Calu3 (cell line): ENCODE measurements at regions of chr3 and their contacts with region 1.

Region 1: DNA sequence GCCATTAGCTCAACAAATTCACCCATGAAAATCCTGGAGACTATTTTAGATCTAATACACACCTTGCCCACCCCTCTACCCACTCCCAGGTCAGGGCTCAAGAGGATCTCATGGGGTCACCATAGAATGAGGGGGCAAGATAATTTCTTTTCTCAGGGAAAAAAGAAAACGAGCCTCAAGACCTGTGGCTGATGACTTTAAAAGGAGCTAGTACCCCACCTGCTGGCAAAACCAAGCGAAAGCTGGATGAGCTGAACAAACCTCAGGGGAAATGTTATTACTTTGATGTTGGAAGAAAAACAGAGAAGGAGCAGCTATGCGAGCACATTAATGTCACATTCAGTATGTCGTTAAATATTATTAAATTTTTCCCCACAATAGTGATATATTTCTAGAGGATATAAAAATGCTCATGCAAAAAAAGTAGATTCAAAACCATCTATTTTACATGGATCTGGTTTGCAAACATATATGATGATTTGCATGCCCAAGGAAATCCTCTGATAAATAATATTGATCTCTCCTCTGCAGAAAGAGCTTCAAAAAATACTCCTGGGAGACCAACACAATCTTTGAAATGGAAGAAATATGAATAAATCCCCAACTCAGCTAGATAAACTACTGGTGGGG is 37.7 kb downstream of the PLD1 start:
- DNase-seq: peak; percentile 82
- H3K4me3 Mint-ChIP-seq: no peak overlapping the region
- H3K27ac Mint-ChIP-seq: no peak overlapping the region
- H3K4me1 Mint-ChIP-seq: peaks cover 81% of the 10 kb centered on the region
- H3K27me3 Mint-ChIP-seq: no peaks in the 10 kb centered on the region
- CTCF ChIP-seq: peak; percentile 77

Region 2: DNA sequence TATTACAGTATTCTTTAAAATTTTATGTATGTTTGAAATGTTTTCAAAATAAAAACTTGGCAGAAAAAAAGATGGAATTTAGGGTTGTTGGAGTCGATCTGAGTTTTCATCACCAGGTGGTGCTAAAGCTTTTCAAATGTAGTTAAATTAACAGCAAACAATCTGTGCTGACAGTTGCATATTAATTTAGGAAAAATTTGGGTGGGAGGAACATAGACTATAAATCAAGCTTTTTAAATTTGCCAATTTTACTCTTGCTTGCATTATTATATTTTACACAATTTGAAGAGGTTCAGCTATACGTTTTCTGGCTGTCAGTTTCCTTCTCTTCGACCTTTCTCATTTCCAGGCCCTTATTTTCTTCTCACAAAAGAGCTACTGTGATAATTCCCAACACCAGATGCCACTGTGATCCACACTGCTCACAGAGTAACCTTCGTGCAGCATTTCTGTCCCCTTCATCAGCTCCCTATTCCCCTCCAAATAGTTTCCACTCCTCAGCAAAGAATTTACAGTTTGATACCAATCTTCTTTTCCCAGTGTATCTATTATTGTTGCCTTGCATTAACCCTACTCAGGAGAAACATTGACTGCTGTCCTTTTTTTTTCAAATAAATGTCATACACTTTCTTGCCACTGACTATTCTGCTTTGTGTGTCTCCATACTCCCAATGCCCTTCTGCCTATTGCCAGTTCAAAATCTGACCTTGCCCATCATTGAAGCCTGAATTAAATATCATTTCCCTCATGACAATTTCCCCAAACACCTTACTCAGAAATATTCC is 810.7 kb before region 1 on chr3:
- CTCF ChIA-PET with region 1: interaction called, 4 read pairs
- intact Hi-C with region 1: loop called (anchors 5 kb)
- DNase-seq: peak; percentile 50
- H3K4me3 Mint-ChIP-seq: no peak overlapping the region
- H3K27ac Mint-ChIP-seq: peak overlapping the region; percentile 8
- H3K4me1 Mint-ChIP-seq: peaks cover 27% of the 10 kb centered on the region
- H3K27me3 Mint-ChIP-seq: no peaks in the 10 kb centered on the region
- CTCF ChIP-seq: peak; percentile 84

Region 3: GRCh38 chr3:171646357-171647133 is 126.0 kb before region 1 on chr3:
- CTCF ChIA-PET with region 1: interaction called, 28 read pairs
- intact Hi-C with region 1: loop called (anchors 1 kb)
- DNase-seq: no peak
- H3K4me3 Mint-ChIP-seq: no peak overlapping the region
- H3K27ac Mint-ChIP-seq: no peak overlapping the region
- H3K4me1 Mint-ChIP-seq: peaks cover 9% of the 10 kb centered on the region
- H3K27me3 Mint-ChIP-seq: no peaks in the 10 kb centered on the region
- CTCF ChIP-seq: peak; percentile 63

Region 4: DNA sequence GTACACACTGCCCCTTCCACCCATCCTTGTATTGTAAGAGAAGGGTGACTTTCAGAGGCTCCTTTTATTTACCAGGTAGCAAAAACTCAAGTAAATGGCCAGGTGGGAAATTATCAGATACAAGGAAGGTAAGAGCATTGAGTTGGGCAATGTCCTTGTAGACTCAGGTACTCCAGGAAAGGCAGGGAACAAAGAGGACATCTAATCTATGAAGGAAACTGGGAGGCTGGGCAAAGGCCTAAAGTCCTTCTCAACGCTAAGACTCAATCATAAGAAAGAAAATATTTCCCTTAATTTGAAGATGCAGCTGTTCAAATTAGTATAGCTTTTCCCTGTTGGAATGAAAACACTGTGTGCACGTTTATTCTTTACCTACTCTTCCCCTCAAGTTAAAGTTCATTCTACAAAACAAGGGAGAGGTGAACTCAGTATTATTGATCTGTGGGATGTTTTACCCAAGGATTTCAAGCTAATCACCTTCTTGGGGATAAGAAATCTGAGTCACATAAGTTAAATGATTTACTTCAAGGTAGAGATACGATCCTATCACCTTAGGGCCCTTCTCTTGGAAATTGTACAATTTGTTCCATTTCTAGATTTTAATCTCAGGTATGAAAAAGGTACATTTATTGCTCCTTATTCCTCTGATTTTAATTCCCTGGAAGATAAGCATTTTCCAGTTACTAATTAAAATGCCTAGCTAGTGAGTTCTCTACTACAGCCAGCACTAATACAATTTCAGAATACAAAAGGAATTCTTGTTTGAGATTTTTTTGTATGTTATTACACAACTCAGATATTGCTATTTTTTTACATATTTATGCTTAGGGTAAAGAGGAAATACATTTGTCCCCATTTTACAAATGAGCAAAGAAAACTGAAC is 42.8 kb before region 1 on chr3:
- CTCF ChIA-PET with region 1: interaction called, 5 read pairs
- intact Hi-C with region 1: loop called (anchors 2 kb)
- DNase-seq: peak; percentile 23
- H3K4me3 Mint-ChIP-seq: no peak overlapping the region
- H3K27ac Mint-ChIP-seq: peak overlapping the region; percentile 16
- H3K4me1 Mint-ChIP-seq: peaks cover 17% of the 10 kb centered on the region
- H3K27me3 Mint-ChIP-seq: no peaks in the 10 kb centered on the region
- CTCF ChIP-seq: no peak

Region 5: GRCh38 chr3:171757361-171758034 is 15.0 kb before region 1 on chr3:
- CTCF ChIA-PET with region 1: interaction called, 33 read pairs
- intact Hi-C with region 1: no loop called
- DNase-seq: no peak
- H3K4me3 Mint-ChIP-seq: no peak overlapping the region
- H3K27ac Mint-ChIP-seq: no peak overlapping the region
- H3K4me1 Mint-ChIP-seq: peaks cover 9% of the 10 kb centered on the region
- H3K27me3 Mint-ChIP-seq: no peaks in the 10 kb centered on the region
- CTCF ChIP-seq: no peak

Region 6: GRCh38 chr3:171809821-171810628 is 37.5 kb after region 1 on chr3 and contains the start of gene PLD1:
- CTCF ChIA-PET with region 1: interaction called, 7 read pairs
- intact Hi-C with region 1: loop called (anchors 2 kb)
- DNase-seq: peak; percentile 97
- H3K4me3 Mint-ChIP-seq: peak within 1 kb of the TSS; percentile 96
- H3K27ac Mint-ChIP-seq: peak within 1 kb of the TSS; percentile 94
- H3K4me1 Mint-ChIP-seq: peaks cover 62% of the 10 kb centered on the region
- H3K27me3 Mint-ChIP-seq: no peaks in the 10 kb centered on the region
- CTCF ChIP-seq: no peak
- total RNA-seq, gene PLD1: 58.5 and 61.2 TPM in 2 replicates

Region 7: DNA sequence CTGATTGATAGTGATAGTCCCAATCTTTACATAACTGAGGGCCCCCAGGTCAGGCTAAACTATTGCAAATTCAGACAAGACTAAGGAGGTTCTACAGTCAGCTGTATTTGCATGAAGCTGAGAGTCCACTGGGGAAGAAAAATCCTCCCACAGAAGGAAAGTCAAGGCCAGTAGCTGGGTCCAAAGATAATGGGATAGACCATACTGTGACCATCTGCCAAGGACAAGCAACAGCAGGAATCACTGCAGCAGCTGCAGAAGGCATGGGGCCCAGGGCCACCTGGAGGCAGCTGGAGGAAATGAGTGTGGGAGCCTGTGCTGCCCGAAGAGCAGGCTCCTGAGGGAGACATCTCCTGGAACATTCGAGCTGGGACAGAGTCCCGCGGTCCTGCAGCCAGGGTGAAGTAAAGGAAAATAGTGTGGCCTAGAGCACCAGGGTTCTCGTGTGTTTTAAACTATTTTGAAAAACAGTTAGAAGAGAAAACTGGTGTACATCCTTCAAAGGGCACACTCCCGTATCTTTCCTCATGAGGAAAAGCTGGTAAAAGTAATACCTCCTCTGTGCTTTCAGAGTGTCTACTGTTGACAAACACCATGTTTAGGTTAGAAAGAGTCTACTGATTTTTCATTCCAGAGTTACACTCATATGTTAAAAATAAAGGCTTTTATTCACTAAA is 57.4 kb after region 1 on chr3:
- CTCF ChIA-PET with region 1: interaction called, 44 read pairs
- intact Hi-C with region 1: loop called (anchors 1 kb)
- DNase-seq: peak; percentile 86
- H3K4me3 Mint-ChIP-seq: no peak overlapping the region
- H3K27ac Mint-ChIP-seq: no peak overlapping the region
- H3K4me1 Mint-ChIP-seq: peaks cover 44% of the 10 kb centered on the region
- H3K27me3 Mint-ChIP-seq: no peaks in the 10 kb centered on the region
- CTCF ChIP-seq: peak; percentile 93

Region 8: DNA sequence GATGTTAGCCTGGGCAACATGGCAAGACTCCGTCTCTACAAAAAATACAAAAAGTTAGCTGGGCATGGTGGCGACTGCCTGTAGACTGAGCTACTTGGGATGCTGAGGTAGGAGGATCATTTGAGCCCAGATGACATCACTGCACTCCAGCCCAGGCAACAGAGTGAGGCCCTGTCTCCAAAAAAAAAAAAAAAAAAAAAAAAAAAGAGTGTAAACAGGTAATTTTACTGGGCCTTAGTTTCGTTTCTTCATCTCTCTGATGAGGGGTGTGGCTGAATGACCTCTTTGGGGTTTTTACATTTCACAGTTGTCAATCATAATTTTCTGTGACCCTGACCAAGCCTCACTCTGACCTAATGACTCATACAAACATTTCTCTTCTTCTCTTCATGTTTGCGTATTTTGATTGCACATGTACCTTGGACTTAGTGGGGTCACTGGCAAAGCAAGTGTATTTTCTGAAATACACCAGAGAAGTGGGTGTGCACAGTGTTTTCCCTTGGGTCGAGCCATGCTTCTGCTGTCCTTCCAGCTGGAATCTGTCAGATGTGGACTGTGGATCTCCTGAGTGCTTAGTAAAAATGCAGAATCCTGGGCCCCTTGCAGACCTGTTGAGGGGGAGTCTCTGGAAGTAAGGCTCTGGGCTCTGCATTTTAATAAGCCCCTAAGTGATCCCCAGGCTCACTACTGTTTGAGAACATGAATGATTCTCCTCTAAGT is 407.3 kb after region 1 on chr3:
- CTCF ChIA-PET with region 1: no interaction called
- intact Hi-C with region 1: no loop called
- DNase-seq: no peak
- H3K4me3 Mint-ChIP-seq: peak overlapping the region; percentile 11
- H3K27ac Mint-ChIP-seq: peak overlapping the region; percentile 66
- H3K4me1 Mint-ChIP-seq: peaks cover 79% of the 10 kb centered on the region
- H3K27me3 Mint-ChIP-seq: no peaks in the 10 kb centered on the region
- CTCF ChIP-seq: no peak

Region 9: GRCh38 chr3:172586436-172586835 is 813.9 kb after region 1 on chr3:
- CTCF ChIA-PET with region 1: no interaction called
- intact Hi-C with region 1: no loop called
- DNase-seq: no peak
- H3K4me3 Mint-ChIP-seq: no peak overlapping the region
- H3K27ac Mint-ChIP-seq: no peak overlapping the region
- H3K4me1 Mint-ChIP-seq: peaks cover 8% of the 10 kb centered on the region
- H3K27me3 Mint-ChIP-seq: no peaks in the 10 kb centered on the region
- CTCF ChIP-seq: no peak